CD4-positive, alpha-beta memory T cell (primary cell): ENCODE measurements at regions of chr1 and their contacts with region 1.

Region 1: DNA sequence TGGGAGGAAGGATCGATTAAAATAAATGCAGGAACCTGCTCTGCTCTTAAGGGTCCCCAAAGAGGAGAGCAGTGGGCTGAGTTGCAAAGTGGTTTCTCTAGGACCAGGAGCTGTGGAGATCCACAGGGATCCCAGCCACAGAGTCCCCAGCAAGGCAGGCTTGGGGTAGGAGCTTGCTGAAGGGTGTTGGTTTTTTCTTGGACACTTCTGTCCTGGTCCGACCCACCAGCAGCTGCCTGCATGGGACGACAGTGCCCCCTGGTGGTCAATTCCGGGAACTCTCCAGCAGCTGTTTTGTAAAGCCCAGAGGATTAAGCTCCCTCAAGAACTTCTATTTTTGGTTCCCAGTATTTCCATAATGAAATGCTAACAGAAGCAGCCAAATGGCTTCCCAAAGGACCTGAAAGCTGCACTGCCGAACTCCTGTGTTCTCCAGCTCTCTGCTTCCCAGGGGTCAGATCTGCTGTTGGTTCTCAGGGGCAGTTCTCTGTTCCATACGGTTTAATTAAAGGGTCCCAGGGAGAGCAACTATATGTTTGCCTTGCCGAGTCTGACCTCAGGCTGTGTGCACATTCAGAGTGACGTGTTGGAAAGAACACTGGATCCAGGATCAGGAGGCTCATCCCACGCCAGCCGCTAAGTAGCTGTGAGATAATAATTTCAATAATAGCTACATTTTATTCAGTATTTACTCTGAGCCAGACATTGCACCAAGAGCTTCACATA is 23.2 kb downstream of the NENF start:
- DNase-seq: peak; percentile 65 to 73 (median 69)
- H3K4me3 ChIP-seq: no peak overlapping the region
- H3K4me3 Mint-ChIP-seq: no peak overlapping the region
- H3K27ac ChIP-seq: no peak overlapping the region
- H3K27ac Mint-ChIP-seq: no peak overlapping the region
- H3K4me1 ChIP-seq: peaks cover 3% of the 10 kb centered on the region
- H3K4me1 Mint-ChIP-seq: peaks cover 0 to 10% (median under 1%) of the 10 kb centered on the region in 4 donors
- H3K27me3 ChIP-seq: no peaks in the 10 kb centered on the region
- H3K27me3 Mint-ChIP-seq: no peaks in the 10 kb centered on the region

Region 2: DNA sequence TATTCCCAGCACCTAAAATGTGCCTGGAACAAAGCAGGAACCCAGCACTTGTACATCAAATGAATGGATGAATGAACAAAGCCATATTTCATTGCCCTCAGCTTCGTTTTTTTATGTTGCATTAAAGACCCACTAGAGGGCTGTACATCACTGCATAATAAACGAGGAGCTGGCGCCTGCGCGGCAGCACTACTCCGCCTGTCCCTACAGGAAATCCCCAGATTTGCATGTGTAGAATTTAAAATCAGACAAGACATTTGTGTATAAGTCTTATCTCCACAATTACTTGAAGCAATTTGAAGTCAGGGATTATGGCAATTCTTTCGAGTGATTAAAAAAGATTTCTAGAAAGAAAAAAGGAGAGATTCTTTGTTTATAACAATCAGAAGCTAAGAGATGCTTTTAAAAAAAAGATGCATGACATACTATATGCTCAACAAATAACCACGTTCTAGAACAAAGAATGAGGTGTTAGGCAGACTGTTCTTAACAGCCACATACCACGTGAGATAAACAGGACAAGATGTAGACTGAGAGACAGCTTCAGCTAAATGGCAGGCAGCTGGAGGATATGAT is 775.1 kb before region 1 on chr1:
- CTCF ChIA-PET with region 1: interaction called, 95 read pairs
- POLR2A ChIA-PET with region 1: interaction called, 6 read pairs
- intact Hi-C with region 1: loop called (anchors 1 kb)
- DNase-seq: peak; percentile 76 to 83 (median 82)
- H3K4me3 ChIP-seq: no peak overlapping the region
- H3K4me3 Mint-ChIP-seq: peak overlapping the region in 4 of 8 donors; percentile 0 to 56 (median 17)
- H3K27ac ChIP-seq: peak overlapping the region; percentile 61
- H3K27ac Mint-ChIP-seq: peak overlapping the region; percentile 77 to 98 (median 92)
- H3K4me1 ChIP-seq: peaks cover 15% of the 10 kb centered on the region
- H3K4me1 Mint-ChIP-seq: peaks cover 9 to 26% (median 12%) of the 10 kb centered on the region in 4 donors
- H3K27me3 ChIP-seq: no peaks in the 10 kb centered on the region
- H3K27me3 Mint-ChIP-seq: no peaks in the 10 kb centered on the region

Region 3: GRCh38 chr1:212062832-212063438 is 393.0 kb before region 1 on chr1:
- CTCF ChIA-PET with region 1: interaction called, 171 read pairs
- POLR2A ChIA-PET with region 1: interaction called, 3 read pairs
- intact Hi-C with region 1: loop called (anchors 1 kb)
- DNase-seq: peak in 4 of 5 donors; percentile 37 to 45 (median 38)
- H3K4me3 ChIP-seq: no peak overlapping the region
- H3K4me3 Mint-ChIP-seq: no peak overlapping the region
- H3K27ac ChIP-seq: no peak overlapping the region
- H3K27ac Mint-ChIP-seq: no peak overlapping the region
- H3K4me1 ChIP-seq: no peaks in the 10 kb centered on the region
- H3K4me1 Mint-ChIP-seq: no peaks in the 10 kb centered on the region
- H3K27me3 ChIP-seq: no peaks in the 10 kb centered on the region
- H3K27me3 Mint-ChIP-seq: no peaks in the 10 kb centered on the region

Region 4: GRCh38 chr1:212271823-212272485 is 184.0 kb before region 1 on chr1:
- CTCF ChIA-PET with region 1: no interaction called
- POLR2A ChIA-PET with region 1: no interaction called
- intact Hi-C with region 1: no loop called
- DNase-seq: no peak
- H3K4me3 ChIP-seq: no peak overlapping the region
- H3K4me3 Mint-ChIP-seq: no peak overlapping the region
- H3K27ac ChIP-seq: no peak overlapping the region
- H3K27ac Mint-ChIP-seq: no peak overlapping the region
- H3K4me1 ChIP-seq: no peaks in the 10 kb centered on the region
- H3K4me1 Mint-ChIP-seq: peaks cover 0 to 5% (median 0%) of the 10 kb centered on the region in 4 donors
- H3K27me3 ChIP-seq: no peaks in the 10 kb centered on the region
- H3K27me3 Mint-ChIP-seq: no peaks in the 10 kb centered on the region

Region 5: DNA sequence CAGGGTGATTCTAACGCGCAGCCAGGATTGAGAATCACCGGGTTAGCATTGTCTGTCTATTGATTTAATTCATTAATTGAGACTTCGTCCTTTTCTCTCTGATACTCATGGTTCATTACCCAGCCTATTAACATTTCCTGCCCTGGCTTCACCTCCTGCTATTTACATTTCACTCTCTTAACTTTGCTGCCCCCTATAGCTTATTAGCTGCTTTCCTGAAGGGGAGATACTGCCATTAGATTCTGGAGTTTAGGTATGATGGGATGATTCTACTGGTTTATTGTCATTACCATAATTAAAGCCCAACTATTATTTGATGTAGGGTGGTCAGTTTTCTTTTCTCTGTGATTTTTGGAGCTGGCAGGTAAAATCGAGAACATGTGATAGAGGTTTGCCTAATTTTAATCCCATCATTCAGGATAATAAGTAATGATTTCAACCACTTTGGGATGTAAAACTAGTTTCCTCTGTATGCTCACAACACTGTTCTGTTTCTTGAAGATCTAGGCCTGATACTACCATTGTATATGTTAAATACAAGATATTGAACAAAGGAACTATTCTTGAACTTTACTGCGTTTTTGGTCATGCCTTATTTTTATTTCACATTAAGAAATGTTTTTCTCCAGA is 164.3 kb before region 1 on chr1:
- CTCF ChIA-PET with region 1: interaction called, 30 read pairs
- POLR2A ChIA-PET with region 1: no interaction called
- intact Hi-C with region 1: loop called (anchors 1 kb)
- DNase-seq: peak in 4 of 5 donors; percentile 57 to 70 (median 64)
- H3K4me3 ChIP-seq: no peak overlapping the region
- H3K4me3 Mint-ChIP-seq: peak overlapping the region; percentile 27 to 70 (median 60)
- H3K27ac ChIP-seq: no peak overlapping the region
- H3K27ac Mint-ChIP-seq: peak overlapping the region in 4 of 7 donors; percentile 0 to 54 (median 16)
- H3K4me1 ChIP-seq: peaks cover 87% of the 10 kb centered on the region
- H3K4me1 Mint-ChIP-seq: peaks cover 66 to 91% (median 81%) of the 10 kb centered on the region in 4 donors
- H3K27me3 ChIP-seq: no peaks in the 10 kb centered on the region
- H3K27me3 Mint-ChIP-seq: no peaks in the 10 kb centered on the region

Region 6: DNA sequence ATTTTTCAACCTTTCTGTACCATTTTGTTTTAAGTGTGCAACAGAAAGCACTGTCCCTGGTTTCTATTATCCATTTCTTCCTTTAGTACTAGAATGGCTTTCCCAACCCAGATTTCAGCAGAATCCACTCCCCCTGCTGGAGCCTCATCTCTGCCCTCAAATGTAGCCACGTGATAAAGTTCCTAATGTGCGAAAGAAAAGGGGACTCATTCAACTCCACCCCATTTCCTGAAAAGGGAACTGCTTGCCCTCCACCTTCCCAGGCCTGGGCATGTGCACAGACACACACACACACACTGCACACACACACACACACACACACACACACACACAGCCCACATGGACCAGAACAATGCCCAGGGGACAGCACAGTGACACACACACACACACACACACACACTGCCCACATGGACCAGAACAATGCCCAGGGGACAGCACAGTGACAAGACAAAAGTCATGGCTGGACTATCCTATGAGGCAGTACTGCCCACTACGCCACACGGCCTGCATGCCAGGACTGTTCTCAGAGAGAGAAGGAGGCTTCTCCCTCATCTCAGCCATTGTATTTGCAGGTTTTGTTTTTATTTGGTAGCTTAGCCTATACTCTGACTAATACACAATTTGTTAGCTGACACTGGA is 74.5 kb before region 1 on chr1:
- CTCF ChIA-PET with region 1: interaction called, 12 read pairs
- POLR2A ChIA-PET with region 1: no interaction called
- intact Hi-C with region 1: no loop called
- DNase-seq: no peak
- H3K4me3 ChIP-seq: no peak overlapping the region
- H3K4me3 Mint-ChIP-seq: no peak overlapping the region
- H3K27ac ChIP-seq: no peak overlapping the region
- H3K27ac Mint-ChIP-seq: peak overlapping the region in 1 of 7 donors; percentile 42
- H3K4me1 ChIP-seq: no peaks in the 10 kb centered on the region
- H3K4me1 Mint-ChIP-seq: peaks cover 0 to 5% (median 4%) of the 10 kb centered on the region in 4 donors
- H3K27me3 ChIP-seq: no peaks in the 10 kb centered on the region
- H3K27me3 Mint-ChIP-seq: no peaks in the 10 kb centered on the region

Region 7: DNA sequence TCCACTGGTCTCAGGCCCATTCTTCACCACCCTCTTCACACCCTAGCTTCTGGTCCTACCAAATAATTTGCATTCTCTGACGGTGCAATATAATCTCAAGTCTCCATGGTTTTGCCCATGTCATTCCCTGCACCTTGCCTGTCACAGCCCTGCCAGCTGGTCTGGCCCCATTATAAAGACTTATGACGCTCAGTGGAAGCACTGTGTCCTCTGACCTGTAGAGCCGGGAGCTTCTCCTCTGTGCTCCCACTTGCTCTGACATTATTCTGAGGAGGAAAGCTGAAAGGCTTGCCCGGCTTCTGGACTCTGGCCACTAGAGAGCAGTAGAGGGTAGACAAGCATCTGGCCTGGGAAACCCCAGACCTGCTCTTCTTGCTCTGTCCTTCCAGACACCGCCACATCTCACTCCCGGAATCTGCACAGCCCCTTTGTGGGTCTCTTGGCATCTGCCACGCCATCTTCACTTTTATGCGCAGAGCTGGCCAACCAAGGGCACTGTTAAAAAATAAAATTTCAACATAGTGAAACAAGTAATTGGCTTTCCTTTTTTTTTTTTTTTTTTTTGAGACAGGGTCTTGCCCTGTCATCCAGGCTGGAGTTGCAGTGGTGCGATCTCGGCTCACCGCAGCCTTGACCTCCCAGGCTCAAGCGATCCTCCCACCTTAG is 21.2 kb after region 1 on chr1:
- CTCF ChIA-PET with region 1: interaction called, 69 read pairs
- POLR2A ChIA-PET with region 1: no interaction called
- intact Hi-C with region 1: no loop called
- DNase-seq: peak; percentile 67 to 78 (median 70)
- H3K4me3 ChIP-seq: no peak overlapping the region
- H3K4me3 Mint-ChIP-seq: peak overlapping the region in 6 of 8 donors; percentile 19 to 70 (median 45)
- H3K27ac ChIP-seq: no peak overlapping the region
- H3K27ac Mint-ChIP-seq: peak overlapping the region in 1 of 7 donors; percentile 32
- H3K4me1 ChIP-seq: peaks cover 8% of the 10 kb centered on the region
- H3K4me1 Mint-ChIP-seq: peaks cover 0 to 14% (median 5%) of the 10 kb centered on the region in 4 donors
- H3K27me3 ChIP-seq: no peaks in the 10 kb centered on the region
- H3K27me3 Mint-ChIP-seq: peaks cover 2 to 6% of the 10 kb centered on the region in 2 donors

Region 8: DNA sequence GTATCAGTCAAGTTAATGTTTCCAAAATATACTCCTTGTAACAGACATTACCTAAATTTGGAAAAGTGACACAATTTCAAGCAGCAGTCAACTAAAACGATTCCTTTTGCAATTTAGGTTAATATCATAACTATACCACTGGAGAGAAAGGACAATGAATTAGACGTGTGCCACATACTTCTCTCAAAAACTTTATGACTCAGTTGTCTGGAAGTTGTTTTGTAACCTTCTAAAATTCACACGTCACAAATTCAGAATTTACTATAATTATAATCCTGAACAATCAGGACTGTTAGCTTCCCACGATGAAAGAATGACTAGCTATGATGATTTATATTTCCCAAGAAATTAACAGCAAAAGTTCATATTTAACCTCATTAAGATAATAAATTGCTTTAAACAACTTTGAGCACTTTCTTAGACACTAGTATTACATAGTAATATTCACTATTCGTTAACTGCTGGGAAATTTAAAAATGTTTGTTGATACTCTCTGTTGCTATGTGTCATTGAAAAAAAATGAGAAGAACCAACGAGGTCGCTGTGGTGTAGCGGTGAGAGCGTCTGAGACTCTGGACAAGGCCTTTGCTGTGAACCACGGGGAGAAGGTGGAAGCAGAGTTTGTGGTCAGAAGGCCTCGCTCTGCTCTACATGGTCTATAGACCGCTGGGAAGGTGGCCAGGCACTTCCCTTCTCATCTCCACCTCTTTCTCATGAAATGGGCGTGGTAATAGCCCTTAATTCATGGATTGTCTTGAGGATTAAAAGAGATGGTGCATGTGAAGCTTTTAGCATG is 271.6 kb after region 1 on chr1:
- CTCF ChIA-PET with region 1: no interaction called
- POLR2A ChIA-PET with region 1: no interaction called
- intact Hi-C with region 1: no loop called
- DNase-seq: no peak
- H3K4me3 ChIP-seq: no peak overlapping the region
- H3K4me3 Mint-ChIP-seq: no peak overlapping the region
- H3K27ac ChIP-seq: no peak overlapping the region
- H3K27ac Mint-ChIP-seq: peak overlapping the region in 3 of 7 donors; percentile 30 to 84 (median 58)
- H3K4me1 ChIP-seq: peaks cover 3% of the 10 kb centered on the region
- H3K4me1 Mint-ChIP-seq: peaks cover 4 to 16% (median 10%) of the 10 kb centered on the region in 4 donors
- H3K27me3 ChIP-seq: no peaks in the 10 kb centered on the region
- H3K27me3 Mint-ChIP-seq: no peaks in the 10 kb centered on the region